Caco-2 (cell line): ENCODE measurements at regions of chr12 and their contacts with region 1.

Region 1: DNA sequence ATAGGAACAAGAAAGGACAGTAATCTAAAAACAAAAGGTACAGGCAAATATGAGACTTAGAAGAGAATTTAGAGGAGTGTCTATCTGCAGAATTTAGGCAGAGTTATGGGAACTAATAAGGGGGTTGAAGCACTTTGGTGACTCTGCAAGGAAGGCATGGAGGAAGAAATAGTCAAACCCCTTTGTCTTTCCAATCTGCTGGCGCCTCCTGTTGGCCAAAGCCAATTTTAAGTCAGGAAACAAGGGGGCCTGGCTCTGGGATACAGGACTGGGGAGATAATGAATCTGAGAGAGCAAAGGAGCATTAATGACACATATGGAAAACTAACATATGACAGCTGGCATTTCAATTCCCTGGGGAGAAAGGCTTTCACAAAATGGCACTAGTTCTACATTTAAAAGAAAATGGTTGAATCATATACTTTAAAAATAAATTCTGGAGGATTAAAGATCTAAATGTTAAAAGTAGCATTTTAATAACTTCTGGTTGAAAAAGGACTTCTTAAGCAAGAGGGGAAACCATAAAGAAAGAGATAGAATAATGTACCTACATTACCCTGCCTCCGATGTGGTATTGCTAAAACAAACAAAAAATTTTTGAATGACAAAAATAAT is 48.5 kb upstream of the CSRP2 start:
- DNase-seq: peak; percentile 38 to 51
- H3K4me3 ChIP-seq: no peak overlapping the region
- H3K4me3 Mint-ChIP-seq: no peak overlapping the region
- H3K27ac Mint-ChIP-seq: no peak overlapping the region
- H3K4me1 ChIP-seq: no peaks in the 10 kb centered on the region
- H3K4me1 Mint-ChIP-seq: no peaks in the 10 kb centered on the region
- H3K27me3 ChIP-seq: no peaks in the 10 kb centered on the region; the same call in 1 of the 2 replicates
- H3K27me3 Mint-ChIP-seq: peaks cover 6% of the 10 kb centered on the region
- CTCF ChIP-seq: peak; percentile 35 to 46

Region 2: DNA sequence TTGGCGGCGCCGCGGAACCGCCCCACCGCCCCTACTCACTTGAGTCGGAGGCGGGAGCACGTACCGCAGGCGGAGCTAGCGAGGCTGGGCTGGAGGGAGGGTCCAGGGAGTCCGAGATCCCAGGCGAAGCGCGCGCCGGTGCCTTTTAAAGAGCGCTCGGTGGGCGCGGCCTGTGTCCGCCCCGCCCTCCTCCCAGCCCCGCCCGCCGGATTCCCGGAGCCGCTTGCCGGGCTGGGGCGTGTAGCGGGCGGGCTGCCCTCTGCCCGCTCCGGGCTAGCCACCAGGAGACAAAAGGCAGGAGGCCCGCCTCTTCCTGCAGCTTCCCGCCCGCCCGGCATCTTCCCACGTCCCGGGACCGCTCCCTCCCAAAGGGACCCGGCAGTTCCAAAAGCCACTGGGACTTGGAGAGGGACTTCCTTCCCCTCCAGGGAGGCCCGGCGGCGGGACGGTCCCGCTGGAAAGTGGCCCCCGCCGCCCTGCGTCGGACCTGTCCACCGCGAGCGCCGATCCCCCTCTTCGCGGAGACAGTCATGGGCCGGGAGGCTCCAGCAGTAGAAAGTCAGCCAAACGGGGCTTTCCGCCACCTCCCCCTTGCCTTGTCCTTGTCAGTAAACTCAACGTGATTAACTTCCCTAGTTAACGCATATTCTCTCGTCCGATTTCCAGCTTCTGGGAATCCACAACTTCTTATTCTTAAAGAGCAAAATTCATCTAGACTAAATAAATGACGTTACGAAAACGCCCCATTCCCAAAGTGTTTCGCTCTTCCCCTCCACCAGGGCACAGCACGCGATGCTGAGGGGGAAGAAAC is 48.2 kb before region 1 on chr12 and contains the start of gene CSRP2:
- CTCF ChIA-PET with region 1: no interaction called
- POLR2A ChIA-PET with region 1: no interaction called
- intact Hi-C with region 1: loop called (anchors 2 kb)
- DNase-seq: peak; percentile 92 to 93
- H3K4me3 ChIP-seq: peak within 1 kb of the TSS; percentile 80
- H3K4me3 Mint-ChIP-seq: peak within 1 kb of the TSS; percentile 85
- H3K27ac Mint-ChIP-seq: peak within 1 kb of the TSS; percentile 91
- H3K4me1 ChIP-seq: peaks cover 4% of the 10 kb centered on the region
- H3K4me1 Mint-ChIP-seq: no peaks in the 10 kb centered on the region
- H3K27me3 ChIP-seq: no peaks in the 10 kb centered on the region
- H3K27me3 Mint-ChIP-seq: no peaks in the 10 kb centered on the region
- CTCF ChIP-seq: no peak
- total RNA-seq, gene CSRP2: 22.2 and 27.9 TPM in 2 replicates